Calu3 (cell line): ENCODE measurements at regions of chr15 and their contacts with region 1.

Region 1: DNA sequence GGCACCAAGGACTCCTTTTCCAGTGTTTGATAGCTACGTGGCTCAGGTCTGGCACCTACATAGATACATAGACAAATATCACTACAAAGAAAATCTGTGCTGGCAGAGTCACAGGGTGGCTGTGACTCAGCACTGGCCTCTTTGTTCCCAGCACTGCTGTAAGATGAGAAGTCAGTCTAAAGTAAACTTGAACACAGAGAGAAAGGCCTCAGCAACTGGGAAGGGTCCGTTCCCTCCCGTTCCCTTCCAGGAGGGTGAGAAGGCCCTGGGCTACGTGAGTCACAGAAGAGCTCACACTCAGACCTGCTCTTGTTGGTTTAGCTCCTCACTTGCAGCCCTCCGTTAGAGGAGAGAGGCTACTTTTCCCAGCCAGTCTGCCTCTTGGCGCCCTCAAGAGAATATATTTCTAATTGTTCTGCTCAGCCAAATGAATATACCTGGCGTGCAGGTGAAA is 23.1 kb downstream of the ANXA2 start:
- DNase-seq: peak; percentile 92
- H3K4me3 Mint-ChIP-seq: peak overlapping the region; percentile 67
- H3K27ac Mint-ChIP-seq: peak overlapping the region; percentile 100
- H3K4me1 Mint-ChIP-seq: peaks cover 85% of the 10 kb centered on the region
- H3K27me3 Mint-ChIP-seq: no peaks in the 10 kb centered on the region
- CTCF ChIP-seq: no peak

Region 2: DNA sequence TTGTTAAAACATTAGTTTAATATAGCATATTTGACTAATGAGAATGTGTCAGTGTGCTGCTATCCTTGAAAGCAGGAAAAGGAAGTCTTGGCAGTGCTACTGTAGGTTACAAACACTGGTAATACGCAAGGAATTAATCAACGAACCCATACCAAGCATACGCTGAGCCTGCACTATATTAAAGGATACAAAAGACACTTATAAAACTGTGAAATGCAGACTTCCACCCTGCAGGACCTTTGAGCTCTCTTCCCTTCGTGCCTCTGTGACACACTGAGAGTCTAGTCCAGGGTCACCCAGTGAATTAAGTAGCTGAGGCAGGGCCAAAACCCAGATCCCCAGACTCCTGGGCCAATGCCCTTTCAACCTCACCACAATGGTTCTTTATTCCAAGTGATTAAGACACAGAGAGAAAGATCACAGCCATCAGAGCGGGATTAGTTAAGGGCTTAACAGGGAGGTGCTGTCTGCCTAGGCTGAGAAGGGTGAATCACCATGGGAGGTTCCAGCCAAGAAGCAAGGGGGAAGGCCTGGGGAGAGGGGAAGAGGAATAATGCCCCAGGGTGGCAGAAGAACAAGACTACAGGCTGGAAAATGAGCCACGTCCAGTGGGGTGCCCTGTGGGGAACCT is 16.3 kb after region 1 on chr15:
- CTCF ChIA-PET with region 1: interaction called, 6 read pairs
- intact Hi-C with region 1: loop called (anchors 2 kb)
- DNase-seq: peak; percentile 81
- H3K4me3 Mint-ChIP-seq: peak overlapping the region; percentile 86
- H3K27ac Mint-ChIP-seq: peak overlapping the region; percentile 90
- H3K4me1 Mint-ChIP-seq: peaks cover 80% of the 10 kb centered on the region
- H3K27me3 Mint-ChIP-seq: no peaks in the 10 kb centered on the region
- CTCF ChIP-seq: no peak

Region 3: DNA sequence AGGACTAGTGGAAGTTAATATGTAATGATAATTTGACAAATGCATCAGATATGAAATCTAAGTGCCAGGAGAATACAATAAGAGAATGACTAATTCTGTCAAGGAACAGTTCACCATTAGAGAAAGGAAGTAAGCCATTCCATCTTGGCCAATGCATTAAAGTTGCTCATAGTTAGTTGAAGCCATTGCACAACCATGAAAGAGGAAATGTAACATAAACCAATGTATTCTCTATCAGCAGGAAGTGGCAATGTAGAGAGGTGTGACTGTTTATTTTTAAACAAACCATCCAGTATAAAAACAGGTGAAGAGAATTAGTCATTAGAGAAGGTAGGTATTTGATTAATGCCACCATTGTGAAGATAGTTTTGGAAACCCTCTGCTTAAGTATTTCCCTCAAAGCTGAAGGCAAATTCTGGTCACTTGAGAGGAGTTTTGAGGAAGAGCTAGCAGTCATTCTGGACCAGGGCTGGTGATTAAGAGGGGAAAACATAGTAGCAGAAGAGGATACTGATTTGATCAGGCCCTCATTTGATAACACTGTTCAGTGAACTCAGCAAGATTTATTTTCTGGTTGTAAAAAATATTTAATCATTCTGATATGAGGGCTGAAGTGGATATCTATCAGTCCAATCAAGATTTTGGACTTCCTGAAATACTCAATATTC is 33.9 kb after region 1 on chr15:
- CTCF ChIA-PET with region 1: interaction called, 5 read pairs
- intact Hi-C with region 1: loop called (anchors 5 kb)
- DNase-seq: no peak
- H3K4me3 Mint-ChIP-seq: peak overlapping the region; percentile 55
- H3K27ac Mint-ChIP-seq: peak overlapping the region; percentile 100
- H3K4me1 Mint-ChIP-seq: peaks cover 65% of the 10 kb centered on the region
- H3K27me3 Mint-ChIP-seq: no peaks in the 10 kb centered on the region
- CTCF ChIP-seq: no peak

Region 4: DNA sequence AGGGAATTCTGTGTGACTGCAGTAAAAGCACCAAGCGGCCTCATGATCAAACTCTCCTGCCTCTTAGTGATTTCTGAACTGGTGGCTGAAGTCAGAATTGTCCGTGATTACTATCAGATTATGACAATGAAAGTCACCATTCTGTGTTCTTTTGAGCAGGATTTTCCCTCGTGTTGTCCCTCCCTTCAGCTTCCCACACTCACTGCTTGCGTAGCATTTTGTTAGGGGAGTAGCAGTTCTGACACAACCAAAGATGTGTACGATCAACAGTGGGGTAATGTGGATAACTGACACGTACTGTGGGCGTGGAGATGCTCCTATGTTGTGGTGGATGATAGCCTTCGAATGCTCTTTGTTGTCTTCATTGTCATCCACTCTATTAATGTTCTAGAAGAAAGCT is 172.1 kb after region 1 on chr15:
- CTCF ChIA-PET with region 1: no interaction called
- intact Hi-C with region 1: no loop called
- DNase-seq: no peak
- H3K4me3 Mint-ChIP-seq: no peak overlapping the region
- H3K27ac Mint-ChIP-seq: no peak overlapping the region
- H3K4me1 Mint-ChIP-seq: peaks cover 10% of the 10 kb centered on the region
- H3K27me3 Mint-ChIP-seq: no peaks in the 10 kb centered on the region
- CTCF ChIP-seq: no peak